Sigmoid colon (tissue), 7 donors: ENCODE measurements at regions of chr3 and their contacts with region 1.

Region 1: GRCh38 chr3:40584625-40585189 is 59.9 kb downstream of the ZNF621 start:
- DNase-seq: peak; percentile 92
- H3K4me3 ChIP-seq: peak overlapping the region in 2 of 4 donors; percentile 8 to 10
- H3K27ac ChIP-seq: peak overlapping the region in 2 of 4 donors; percentile 26 to 30
- H3K4me1 ChIP-seq: peaks cover 0 to 10% (median 7%) of the 10 kb centered on the region in 4 donors
- H3K27me3 ChIP-seq: no peaks in the 10 kb centered on the region
- CTCF ChIP-seq: peak; percentile 53 to 95 (median 86)
- EP300 ChIP-seq: no peak
- POLR2A ChIP-seq: no peak

Region 2: DNA sequence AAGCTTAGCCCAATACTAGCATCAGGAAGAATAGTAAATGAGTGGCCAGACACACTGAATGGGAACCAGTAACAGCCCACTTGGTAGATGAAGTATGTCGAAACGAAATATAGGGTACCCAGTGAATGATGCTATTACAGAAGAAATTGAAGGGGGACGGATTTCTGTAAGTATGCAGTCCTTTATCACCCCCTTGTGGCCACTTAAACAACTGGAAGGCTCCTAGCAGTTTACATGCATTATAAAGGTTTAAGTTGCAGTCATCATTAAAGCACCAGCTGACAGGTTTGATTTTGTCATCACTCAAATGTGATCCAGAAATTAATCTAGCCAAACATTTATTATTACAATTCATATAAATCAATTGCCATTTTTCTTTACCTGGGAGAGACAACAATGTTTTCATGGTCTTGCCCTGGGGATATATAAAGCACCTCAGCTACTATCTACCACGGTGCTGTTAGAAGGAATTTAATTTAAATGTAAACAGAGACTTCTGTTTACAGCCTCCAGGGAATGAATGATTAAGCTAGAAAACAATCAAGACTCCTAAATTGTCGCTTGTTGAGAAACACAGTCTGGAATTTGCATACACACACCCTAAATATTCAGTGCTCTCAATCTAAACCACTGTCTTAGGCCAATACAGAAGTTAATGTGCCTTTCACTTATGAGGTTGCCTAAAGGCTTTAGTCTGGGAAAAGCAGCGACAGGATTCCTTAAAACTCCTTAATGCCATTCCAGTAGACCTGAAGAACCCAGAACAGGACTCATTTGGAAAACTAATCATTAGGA is 267.4 kb before region 1 on chr3:
- intact Hi-C with region 1: loop called (anchors 10 kb)
- DNase-seq: no peak
- H3K4me3 ChIP-seq: no peak overlapping the region
- H3K27ac ChIP-seq: no peak overlapping the region
- H3K4me1 ChIP-seq: peaks cover 0 to 11% (median 10%) of the 10 kb centered on the region in 4 donors
- H3K27me3 ChIP-seq: no peaks in the 10 kb centered on the region
- CTCF ChIP-seq: peak; percentile 43 to 79 (median 56)
- EP300 ChIP-seq: no peak
- POLR2A ChIP-seq: no peak

Region 3: DNA sequence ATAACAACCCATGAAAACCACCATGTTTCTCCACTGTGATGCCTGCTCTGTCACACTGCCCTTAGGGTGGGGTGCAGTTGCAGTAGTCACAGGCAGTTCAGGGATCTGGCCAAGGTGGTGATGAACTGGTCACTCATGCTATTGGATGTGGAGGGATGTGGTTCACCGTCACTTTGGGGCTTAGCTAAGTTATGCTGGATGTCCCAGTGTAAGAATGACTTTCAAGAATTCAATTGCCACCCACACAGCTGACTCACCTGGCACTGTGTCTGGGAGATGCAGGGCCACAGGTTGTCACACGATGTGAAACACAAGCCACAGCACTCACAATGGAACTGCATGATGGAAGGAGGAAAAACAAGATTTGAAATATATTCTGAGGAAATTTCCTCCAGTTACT is 468.5 kb after region 1 on chr3:
- intact Hi-C with region 1: no loop called
- DNase-seq: no peak
- H3K4me3 ChIP-seq: no peak overlapping the region
- H3K27ac ChIP-seq: no peak overlapping the region
- H3K4me1 ChIP-seq: no peaks in the 10 kb centered on the region
- H3K27me3 ChIP-seq: no peaks in the 10 kb centered on the region
- CTCF ChIP-seq: no peak
- EP300 ChIP-seq: no peak
- POLR2A ChIP-seq: no peak

Region 4: DNA sequence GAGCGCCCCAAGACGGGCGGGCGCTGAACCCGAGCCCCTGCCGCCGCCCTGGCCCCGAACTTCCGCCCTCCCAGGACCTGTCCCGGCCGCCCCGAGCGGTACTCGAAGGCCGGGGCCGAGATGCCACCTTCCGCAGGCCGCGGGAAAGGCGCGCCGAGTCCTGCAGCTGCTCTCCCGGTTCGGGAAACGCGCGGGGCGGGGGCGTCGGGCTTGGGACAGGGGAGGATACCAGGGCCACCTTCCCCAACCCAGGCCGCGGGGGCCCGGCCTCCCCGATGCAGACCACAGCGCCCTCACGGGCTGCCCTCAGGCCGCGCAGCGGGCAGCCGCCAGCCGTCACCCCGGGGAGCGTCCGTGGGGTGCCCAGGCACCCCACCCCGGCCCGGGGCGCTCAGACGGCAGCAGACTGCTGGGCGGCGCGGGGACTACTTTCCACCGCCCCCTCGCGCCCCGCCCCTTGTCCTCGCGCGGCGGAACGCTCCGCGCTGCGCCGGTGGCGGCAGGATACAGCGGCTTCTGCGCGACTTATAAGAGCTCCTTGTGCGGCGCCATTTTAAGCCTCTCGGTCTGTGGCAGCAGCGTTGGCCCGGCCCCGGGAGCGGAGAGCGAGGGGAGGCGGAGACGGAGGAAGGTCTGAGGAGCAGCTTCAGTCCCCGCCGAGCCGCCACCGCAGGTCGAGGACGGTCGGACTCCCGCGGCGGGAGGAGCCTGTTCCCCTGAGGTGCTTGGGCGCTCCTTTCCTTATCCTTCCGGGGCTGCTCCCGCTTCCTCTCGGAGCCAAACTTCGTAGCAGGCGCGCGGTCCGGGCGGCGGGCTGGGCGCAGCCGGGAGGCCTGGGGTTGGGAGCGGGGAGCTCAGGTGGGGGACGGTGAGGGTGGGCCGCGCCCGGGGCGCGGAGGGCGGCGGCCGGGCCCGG is 614.5 kb after region 1 on chr3 and contains the start of gene CTNNB1:
- intact Hi-C with region 1: loop called (anchors 5 kb)
- DNase-seq: peak; percentile 96
- H3K4me3 ChIP-seq: peak within 1 kb of the TSS; percentile 70 to 97 (median 90)
- H3K27ac ChIP-seq: peak within 1 kb of the TSS; percentile 96 to 99 (median 98)
- H3K4me1 ChIP-seq: peaks cover 2 to 43% (median 26%) of the 10 kb centered on the region in 4 donors
- H3K27me3 ChIP-seq: no peaks in the 10 kb centered on the region
- CTCF ChIP-seq: peak in 1 of 4 experiments; percentile 9
- EP300 ChIP-seq: no peak
- POLR2A ChIP-seq: peak; percentile 98
- total RNA-seq, gene CTNNB1: 362 to 495 (median 404) TPM

Region 5: DNA sequence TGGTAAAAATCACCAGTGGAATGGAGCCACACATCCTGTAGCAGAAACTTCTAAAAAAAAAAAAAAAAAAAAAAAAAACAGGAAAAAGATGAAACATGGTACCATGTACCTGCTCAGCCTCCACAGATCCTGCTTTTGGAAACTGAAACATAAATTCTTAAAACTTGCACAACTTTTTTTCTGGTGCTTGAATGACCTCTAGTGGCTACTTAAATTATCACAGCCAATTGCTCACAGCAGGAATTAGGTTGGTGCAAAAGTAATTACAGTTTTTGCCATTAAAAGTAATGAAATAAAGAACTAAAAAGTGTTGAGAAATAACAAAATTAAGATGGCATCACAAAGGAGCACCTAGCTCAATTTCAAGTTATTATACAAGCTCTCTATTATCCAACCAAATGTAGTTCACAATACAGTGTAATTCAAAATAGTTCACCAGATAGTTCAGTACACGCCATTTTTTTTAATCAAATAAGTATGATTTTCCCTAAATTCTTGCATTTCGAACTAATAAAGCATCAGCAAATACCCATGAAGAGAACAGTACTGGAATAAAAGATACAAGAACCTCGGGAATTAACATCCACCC is 1296.6 kb after region 1 on chr3:
- intact Hi-C with region 1: loop called (anchors 2 kb)
- DNase-seq: no peak
- H3K4me3 ChIP-seq: no peak overlapping the region
- H3K27ac ChIP-seq: no peak overlapping the region
- H3K4me1 ChIP-seq: peaks cover 0 to 5% (median 0%) of the 10 kb centered on the region in 4 donors
- H3K27me3 ChIP-seq: no peaks in the 10 kb centered on the region
- CTCF ChIP-seq: peak in 3 of 4 experiments; percentile 37 to 51 (median 43)
- EP300 ChIP-seq: no peak
- POLR2A ChIP-seq: no peak